MCF 10A (cell line): ENCODE measurements at regions of chr2 and their contacts with region 1.

Region 1: DNA sequence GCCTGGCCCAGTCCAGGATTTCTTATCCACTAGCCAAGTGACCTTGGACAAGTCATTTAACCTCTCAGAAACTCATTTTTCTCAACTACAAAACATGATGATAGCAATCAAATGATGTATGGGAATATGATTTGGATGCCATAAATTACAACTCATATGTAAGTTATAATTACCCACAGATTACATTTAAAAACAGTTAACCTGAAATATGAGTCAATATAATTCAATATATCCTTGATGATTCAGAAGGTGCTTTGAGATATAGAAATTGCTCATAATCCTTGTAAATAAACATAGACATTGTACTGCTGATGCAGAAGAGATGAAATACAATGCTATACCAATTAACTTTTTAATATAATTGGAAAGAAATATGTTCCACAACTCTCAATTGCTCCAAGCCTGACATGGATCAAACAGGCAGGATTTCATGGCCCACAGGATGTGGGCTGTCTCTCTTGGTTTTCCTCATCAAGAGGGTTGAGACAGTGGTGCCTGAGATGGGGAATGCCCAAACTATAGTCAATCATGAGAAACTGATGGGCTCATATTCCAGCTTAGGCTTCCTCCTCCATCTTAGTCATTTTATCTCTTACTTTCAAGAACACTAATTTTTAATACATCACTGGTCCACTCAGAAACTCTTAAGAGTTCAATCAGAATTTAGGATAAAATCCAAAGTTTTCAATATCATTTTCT is 49.5 kb downstream of the NCKAP5 start:
- DNase-seq: no peak
- H3K4me3 Mint-ChIP-seq: no peak overlapping the region
- H3K27ac Mint-ChIP-seq: no peak overlapping the region
- H3K4me1 Mint-ChIP-seq: no peaks in the 10 kb centered on the region
- H3K27me3 Mint-ChIP-seq: no peaks in the 10 kb centered on the region
- CTCF ChIP-seq: no peak

Region 2: GRCh38 chr2:133271133-133271532 is 247.7 kb before region 1 on chr2:
- CTCF ChIA-PET with region 1: no interaction called
- POLR2A ChIA-PET with region 1: no interaction called
- intact Hi-C with region 1: no loop called
- DNase-seq: no peak
- H3K4me3 Mint-ChIP-seq: no peak overlapping the region
- H3K27ac Mint-ChIP-seq: no peak overlapping the region
- H3K4me1 Mint-ChIP-seq: no peaks in the 10 kb centered on the region
- H3K27me3 Mint-ChIP-seq: no peaks in the 10 kb centered on the region
- CTCF ChIP-seq: no peak

Region 3: DNA sequence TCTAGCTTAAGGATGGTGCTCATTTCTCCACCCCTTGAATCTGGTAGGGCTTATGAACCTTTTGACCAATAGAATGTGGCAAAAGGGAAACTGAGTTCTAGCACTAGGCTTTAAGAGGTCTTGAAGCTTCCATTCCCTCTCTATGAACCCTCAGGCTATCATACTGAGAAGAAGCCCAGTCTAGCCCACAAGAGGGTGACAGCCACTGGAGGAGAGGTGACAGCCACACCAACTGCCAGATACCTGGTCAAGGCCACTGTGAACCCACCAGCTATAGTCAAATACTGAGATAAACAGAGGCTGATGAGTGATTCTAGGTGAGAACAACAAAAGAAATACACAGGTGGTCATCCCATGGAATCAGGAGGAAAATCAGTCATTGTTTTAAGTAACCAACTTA is 11.8 kb after region 1 on chr2:
- CTCF ChIA-PET with region 1: interaction called, 15 read pairs
- POLR2A ChIA-PET with region 1: no interaction called
- intact Hi-C with region 1: no loop called
- DNase-seq: no peak
- H3K4me3 Mint-ChIP-seq: no peak overlapping the region
- H3K27ac Mint-ChIP-seq: no peak overlapping the region
- H3K4me1 Mint-ChIP-seq: peaks cover 10% of the 10 kb centered on the region
- H3K27me3 Mint-ChIP-seq: no peaks in the 10 kb centered on the region
- CTCF ChIP-seq: no peak